Activated CD4-positive, alpha-beta memory T cell treated with anti-CD3 and anti-CD28 coated beads, Interleukin-2, amount 10 ng/mL, durations not matched to agents 7 days and 5 days (primary cell): ENCODE measurements at regions of chr18 and their contacts with region 1.

Region 1: GRCh38 chr18:54119524-54120019 is 104.9 kb downstream of the MBD2 start:
- DNase-seq: no peak
- H3K4me3 Mint-ChIP-seq: peak overlapping the region; percentile 27
- H3K27ac Mint-ChIP-seq: no peak overlapping the region
- H3K4me1 Mint-ChIP-seq: peaks cover 9% of the 10 kb centered on the region
- H3K27me3 Mint-ChIP-seq: no peaks in the 10 kb centered on the region

Region 2: DNA sequence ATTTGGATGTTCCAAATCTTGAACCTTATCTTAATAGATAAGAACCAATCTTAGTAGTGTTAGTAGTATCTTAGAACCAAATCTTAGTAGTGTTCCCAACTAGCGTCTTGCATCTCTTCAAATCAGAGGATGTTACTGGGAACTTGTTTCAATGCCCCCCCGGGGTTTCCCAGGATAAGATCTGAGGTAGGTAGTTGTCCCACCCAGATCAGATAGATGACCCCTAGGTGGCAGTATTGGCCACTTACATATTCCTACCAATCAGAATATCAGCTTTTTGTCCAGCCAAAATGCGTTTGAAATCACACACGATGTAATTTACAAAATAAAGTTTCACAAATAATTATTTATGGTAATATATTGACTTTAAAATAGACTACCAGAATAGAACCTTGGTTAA is 209.9 kb before region 1 on chr18:
- CTCF ChIA-PET with region 1: interaction called, 33 read pairs
- POLR2A ChIA-PET with region 1: interaction called, 4 read pairs
- DNase-seq: peak; percentile 22
- H3K4me3 Mint-ChIP-seq: no peak overlapping the region
- H3K27ac Mint-ChIP-seq: no peak overlapping the region
- H3K4me1 Mint-ChIP-seq: no peaks in the 10 kb centered on the region
- H3K27me3 Mint-ChIP-seq: peaks cover 6% of the 10 kb centered on the region

Region 3: DNA sequence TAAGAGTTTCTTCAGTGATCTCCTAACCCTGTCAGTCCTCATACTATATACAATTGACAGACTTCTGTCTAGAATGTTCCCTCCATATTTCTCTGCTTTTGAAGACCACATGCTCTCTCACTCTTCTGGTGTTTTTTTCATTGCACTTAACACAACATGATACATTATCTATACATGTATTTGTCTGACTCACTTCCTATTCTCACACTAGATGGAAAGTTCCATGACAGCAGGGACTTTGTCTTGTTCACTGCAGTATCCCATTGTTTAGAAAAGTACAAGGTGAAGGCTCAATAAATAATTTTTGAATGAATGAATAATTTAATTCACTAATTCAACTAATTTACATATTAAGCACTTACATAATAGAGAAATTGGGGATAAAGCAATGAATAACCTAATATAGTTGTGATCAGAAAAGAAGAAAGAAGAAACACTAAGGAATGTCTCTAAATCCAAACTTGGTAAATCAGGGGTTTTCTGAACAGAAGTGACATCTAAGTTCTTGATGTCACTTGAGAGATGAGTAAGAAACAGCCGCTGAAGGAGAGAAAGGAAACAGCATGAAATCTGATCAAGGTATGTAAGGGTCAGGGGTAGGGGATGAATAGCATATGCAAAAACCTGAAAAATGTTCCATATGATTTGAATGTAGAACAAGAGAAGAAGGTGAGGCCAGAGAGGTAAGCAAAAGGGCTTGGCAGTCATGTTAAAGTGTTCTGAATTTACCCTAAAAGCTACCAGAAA is 62.5 kb after region 1 on chr18:
- CTCF ChIA-PET with region 1: no interaction called
- POLR2A ChIA-PET with region 1: no interaction called
- DNase-seq: no peak
- H3K4me3 Mint-ChIP-seq: no peak overlapping the region
- H3K27ac Mint-ChIP-seq: no peak overlapping the region
- H3K4me1 Mint-ChIP-seq: peaks cover 5% of the 10 kb centered on the region
- H3K27me3 Mint-ChIP-seq: no peaks in the 10 kb centered on the region

Region 4: DNA sequence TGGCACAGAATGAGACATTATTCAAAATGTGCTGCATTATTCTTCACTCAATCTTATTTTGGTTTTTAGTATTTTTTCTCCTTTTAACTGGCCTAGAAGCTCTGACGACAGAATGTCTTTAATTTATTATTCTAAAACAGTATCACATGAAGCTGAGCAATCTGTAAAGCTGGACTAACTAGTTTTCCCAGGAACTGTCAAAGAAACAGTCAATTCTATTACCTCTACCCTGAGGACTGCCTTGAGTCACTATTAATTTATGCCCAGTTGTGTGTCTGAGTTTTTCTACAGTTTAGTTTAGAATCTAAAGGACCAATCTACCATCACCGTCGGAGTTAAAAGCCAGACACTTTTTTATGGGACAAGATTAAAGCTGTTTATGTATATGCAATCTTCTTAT is 73.3 kb after region 1 on chr18:
- CTCF ChIA-PET with region 1: no interaction called
- POLR2A ChIA-PET with region 1: no interaction called
- DNase-seq: no peak
- H3K4me3 Mint-ChIP-seq: no peak overlapping the region
- H3K27ac Mint-ChIP-seq: no peak overlapping the region
- H3K4me1 Mint-ChIP-seq: peaks cover 6% of the 10 kb centered on the region
- H3K27me3 Mint-ChIP-seq: no peaks in the 10 kb centered on the region